ENCODE measurements at regions of chr13 and their contacts with region 1.

Region 1: GRCh38 chr13:100088644-100089464 is at the start of gene PCCA:
- DNase-seq: peak; percentile 93
- ATAC-seq: peak; percentile 96
- H3K4me3 ChIP-seq: peak within 1 kb of the TSS; percentile 88 to 93 (median 93)
- H3K27ac ChIP-seq: peak within 1 kb of the TSS; percentile 73
- H3K4me1 ChIP-seq: peaks cover 46% of the 10 kb centered on the region
- H3K27me3 ChIP-seq: no peaks in the 10 kb centered on the region; a peak in 1 of 5 replicates
- CTCF ChIP-seq: peak; percentile 36
- EP300 ChIP-seq: peak in 1 of 2 experiments; percentile 38; a peak in 2 of 4 replicates
- POLR2A ChIP-seq: peak; percentile 71 to 85
- RAD21 ChIP-seq: peak; percentile 15
- total RNA-seq, gene PCCA: 32.2 and 34.6 TPM in 2 replicates

Region 2: DNA sequence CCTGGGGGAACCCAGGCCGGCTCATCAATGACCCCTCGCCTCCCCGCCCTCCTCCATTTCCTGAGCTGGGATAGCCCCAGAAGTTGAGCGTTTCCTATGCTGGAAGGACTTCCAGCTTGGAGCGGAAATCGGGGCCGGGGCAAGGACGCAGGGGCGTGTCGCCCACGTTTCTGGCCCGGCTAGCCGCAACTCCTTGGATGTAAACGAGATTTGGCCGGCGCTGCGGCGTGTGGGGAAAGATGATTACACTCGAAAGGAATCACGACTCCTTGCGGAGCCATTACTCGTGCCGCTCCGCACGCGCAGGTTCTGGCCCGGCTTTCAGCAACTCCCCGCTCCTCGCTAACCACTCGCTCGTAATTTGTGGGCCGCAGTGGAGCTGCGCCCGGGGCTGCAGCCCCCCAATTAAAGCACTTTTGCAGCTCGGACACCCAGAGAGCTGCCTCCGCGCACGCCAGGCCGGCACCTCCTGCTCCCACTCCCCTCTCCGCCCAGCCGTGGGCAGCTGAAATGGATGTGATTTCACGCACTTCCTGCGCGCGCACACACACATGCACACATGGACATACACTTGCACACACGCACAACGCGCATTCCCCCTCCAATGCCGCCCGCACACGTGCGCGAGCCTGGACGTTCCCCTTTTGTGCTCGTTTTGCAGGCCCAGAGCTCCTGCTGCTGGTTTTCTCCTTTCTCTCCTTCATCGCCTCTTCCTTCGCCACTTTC is 132.9 kb before region 1 on chr13:
- CTCF ChIA-PET with region 1: no interaction called
- POLR2A ChIA-PET with region 1: no interaction called
- in situ Hi-C with region 1: no loop called
- intact Hi-C with region 1: no loop called
- DNase-seq: no peak
- ATAC-seq: no peak
- H3K4me3 ChIP-seq: peak overlapping the region; percentile 41 to 69 (median 45); a peak in 5 of 6 replicates
- H3K27ac ChIP-seq: no peak overlapping the region
- H3K4me1 ChIP-seq: peaks cover 51% of the 10 kb centered on the region
- H3K27me3 ChIP-seq: peaks cover 11 to 85% of the 10 kb centered on the region in 2 experiments
- CTCF ChIP-seq: no peak
- EP300 ChIP-seq: no peak
- POLR2A ChIP-seq: no peak
- RAD21 ChIP-seq: no peak

Region 3: DNA sequence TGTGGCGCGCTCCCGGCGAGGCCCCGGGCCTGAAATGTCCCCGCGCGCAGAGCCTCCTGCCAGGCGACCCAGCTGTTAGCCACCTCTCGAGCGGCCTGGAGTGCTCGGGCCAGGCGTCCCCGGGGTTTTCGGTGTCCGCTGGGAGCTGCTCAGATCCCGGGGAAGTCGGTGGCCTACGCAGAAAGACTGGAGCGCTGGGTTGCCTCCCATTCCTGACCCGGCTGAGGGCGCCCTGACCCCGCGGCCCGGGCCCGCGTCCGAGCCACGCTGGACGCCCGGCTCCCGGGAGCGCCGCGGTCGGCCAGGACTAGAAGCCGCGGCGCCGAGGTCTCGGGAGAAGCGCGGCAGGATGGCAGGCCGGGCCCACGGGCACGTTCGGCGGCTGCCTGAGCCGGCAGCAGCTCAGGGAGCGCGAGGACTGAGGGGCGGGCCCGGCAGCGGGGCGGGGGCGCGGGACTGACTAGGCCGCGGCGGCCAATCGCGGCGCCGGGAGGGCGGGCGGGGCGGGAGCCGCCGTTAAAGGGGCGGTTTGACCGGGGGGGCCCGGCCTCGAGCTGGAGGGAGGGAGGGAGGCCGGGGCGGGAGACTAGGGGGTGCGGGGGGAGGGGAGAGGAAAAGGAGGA is 108.5 kb before region 1 on chr13:
- CTCF ChIA-PET with region 1: no interaction called
- POLR2A ChIA-PET with region 1: no interaction called
- in situ Hi-C with region 1: no loop called
- intact Hi-C with region 1: loop called (anchors 1 kb)
- DNase-seq: no peak
- ATAC-seq: peak; percentile 74
- H3K4me3 ChIP-seq: peak overlapping the region; percentile 37 to 73 (median 48); a peak in 4 of 6 replicates
- H3K27ac ChIP-seq: no peak overlapping the region
- H3K4me1 ChIP-seq: peaks cover 38% of the 10 kb centered on the region
- H3K27me3 ChIP-seq: peaks cover 9 to 75% of the 10 kb centered on the region in 2 experiments; a peak in 4 of 5 replicates
- CTCF ChIP-seq: peak; percentile 53
- EP300 ChIP-seq: no peak
- POLR2A ChIP-seq: no peak
- RAD21 ChIP-seq: peak; percentile 66

Region 4: DNA sequence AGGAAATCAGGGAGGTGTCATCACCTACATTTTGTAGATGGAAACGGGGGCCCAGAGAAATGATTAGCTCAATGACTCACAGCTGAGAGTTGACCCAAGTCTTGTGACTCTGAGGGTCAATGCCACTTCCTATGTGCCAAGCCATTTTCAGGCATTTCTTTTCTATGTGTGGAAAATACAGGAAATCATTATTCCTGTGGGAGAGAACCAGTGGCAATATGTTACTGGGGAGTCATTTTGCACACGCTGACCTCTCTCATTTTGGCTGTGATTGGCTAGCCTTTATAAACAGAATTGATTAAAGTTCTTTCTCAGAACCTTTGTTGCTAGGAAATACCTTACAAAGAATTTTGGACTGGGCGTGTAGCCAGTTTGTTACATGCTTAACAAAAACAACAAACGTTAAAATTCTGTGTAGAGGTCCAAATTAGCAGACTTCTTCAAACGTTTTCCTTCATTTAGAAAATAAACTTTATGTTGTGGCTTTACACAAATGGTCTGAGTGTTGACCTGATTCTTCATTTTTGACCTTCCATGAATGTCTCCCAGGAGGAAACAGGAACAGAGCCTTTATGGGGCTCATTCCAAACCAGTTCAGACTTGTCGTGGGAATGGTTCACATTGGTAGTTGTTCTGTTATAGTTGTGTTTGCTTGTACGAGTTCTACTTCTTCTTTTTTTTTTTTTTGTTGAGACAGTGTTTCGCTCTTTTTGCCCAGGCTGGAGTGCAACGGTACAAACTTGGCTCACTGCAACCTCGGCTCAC is 11.4 kb after region 1 on chr13:
- CTCF ChIA-PET with region 1: no interaction called
- POLR2A ChIA-PET with region 1: interaction called, 59 read pairs
- in situ Hi-C with region 1: no loop called
- intact Hi-C with region 1: no loop called
- DNase-seq: peak; percentile 71
- ATAC-seq: peak; percentile 74
- H3K4me3 ChIP-seq: no peak overlapping the region
- H3K27ac ChIP-seq: peak overlapping the region; percentile 3
- H3K4me1 ChIP-seq: peaks cover 39% of the 10 kb centered on the region
- H3K27me3 ChIP-seq: no peaks in the 10 kb centered on the region
- CTCF ChIP-seq: no peak
- EP300 ChIP-seq: peak in 1 of 2 experiments; percentile 61; a peak in 1 of 4 replicates
- POLR2A ChIP-seq: no peak
- RAD21 ChIP-seq: no peak

Region 5: DNA sequence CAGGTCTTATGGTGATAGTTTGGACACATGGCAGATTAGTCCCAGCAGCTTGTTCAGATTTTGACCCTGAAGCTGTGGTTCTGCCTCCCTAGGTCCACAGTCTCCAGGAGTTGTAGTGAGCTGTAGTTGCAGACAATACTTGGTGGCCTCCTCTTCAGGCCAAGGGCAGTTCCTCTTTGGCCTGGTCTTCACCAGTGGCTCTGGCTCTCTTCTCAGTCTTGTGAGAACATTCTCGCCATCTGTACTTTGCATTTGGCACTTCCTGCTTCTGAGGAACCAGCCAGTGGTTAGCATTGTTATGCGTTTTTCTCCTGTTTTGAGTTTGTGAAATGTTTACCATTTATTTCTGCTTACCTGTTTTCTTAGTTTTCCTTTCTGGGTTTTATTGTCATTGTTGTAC is 40.8 kb after region 1 on chr13:
- CTCF ChIA-PET with region 1: no interaction called
- POLR2A ChIA-PET with region 1: no interaction called
- in situ Hi-C with region 1: no loop called
- intact Hi-C with region 1: loop called (anchors 2 kb)
- DNase-seq: no peak
- ATAC-seq: no peak
- H3K4me3 ChIP-seq: no peak overlapping the region
- H3K27ac ChIP-seq: no peak overlapping the region
- H3K4me1 ChIP-seq: peaks cover 21% of the 10 kb centered on the region
- H3K27me3 ChIP-seq: no peaks in the 10 kb centered on the region
- CTCF ChIP-seq: no peak
- EP300 ChIP-seq: no peak
- POLR2A ChIP-seq: no peak
- RAD21 ChIP-seq: no peak

Region 6: GRCh38 chr13:100139817-100140216 is 51.0 kb after region 1 on chr13:
- CTCF ChIA-PET with region 1: no interaction called
- POLR2A ChIA-PET with region 1: no interaction called
- in situ Hi-C with region 1: no loop called
- intact Hi-C with region 1: no loop called
- DNase-seq: peak; percentile 20
- ATAC-seq: no peak
- H3K4me3 ChIP-seq: no peak overlapping the region
- H3K27ac ChIP-seq: no peak overlapping the region
- H3K4me1 ChIP-seq: peaks cover 19% of the 10 kb centered on the region
- H3K27me3 ChIP-seq: no peaks in the 10 kb centered on the region
- CTCF ChIP-seq: no peak
- EP300 ChIP-seq: no peak
- POLR2A ChIP-seq: no peak
- RAD21 ChIP-seq: no peak

Region 7: DNA sequence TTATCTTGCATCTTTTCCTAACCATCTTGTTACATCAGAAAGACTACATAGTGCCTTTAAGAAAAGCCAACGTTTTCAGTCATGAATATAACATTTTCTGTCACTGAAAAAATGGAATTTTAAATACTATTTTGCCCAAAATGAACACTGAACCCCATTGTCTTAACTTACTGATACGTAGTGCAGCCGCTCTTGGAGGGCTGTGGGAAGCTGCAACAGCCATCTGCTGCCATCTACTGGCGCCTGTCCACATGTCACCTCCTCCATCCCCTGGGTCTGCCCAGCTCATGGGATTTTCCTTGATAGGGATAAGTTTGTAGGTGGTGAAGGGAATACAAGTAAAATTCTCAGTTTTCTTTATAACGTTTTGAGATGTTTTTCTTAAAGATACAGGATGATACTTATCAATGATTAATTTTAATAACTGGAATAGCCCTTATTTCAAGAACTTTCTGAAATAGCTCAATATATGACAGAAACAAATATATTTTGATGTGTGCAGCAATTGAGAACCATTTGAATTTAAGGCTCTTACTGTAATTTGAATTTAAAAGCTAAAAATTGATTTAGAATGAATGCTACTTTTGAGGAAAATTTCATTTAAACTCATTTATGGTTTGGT is 426.0 kb after region 1 on chr13:
- CTCF ChIA-PET with region 1: no interaction called
- POLR2A ChIA-PET with region 1: interaction called, 3 read pairs
- in situ Hi-C with region 1: no loop called
- intact Hi-C with region 1: loop called (anchors 5 kb)
- DNase-seq: peak; percentile 56
- ATAC-seq: peak; percentile 92
- H3K4me3 ChIP-seq: no peak overlapping the region
- H3K27ac ChIP-seq: no peak overlapping the region
- H3K4me1 ChIP-seq: peaks cover 31% of the 10 kb centered on the region
- H3K27me3 ChIP-seq: no peaks in the 10 kb centered on the region
- CTCF ChIP-seq: peak; percentile 93
- EP300 ChIP-seq: no peak
- POLR2A ChIP-seq: no peak
- RAD21 ChIP-seq: peak; percentile 84